Posterior vena cava (tissue), 2 donors: ENCODE measurements at regions of chr14 and their contacts with region 1.

Region 1: GRCh38 chr14:89110110-89110509 is 285.7 kb downstream of the TTC8 start:
- DNase-seq: no peak

Region 2: DNA sequence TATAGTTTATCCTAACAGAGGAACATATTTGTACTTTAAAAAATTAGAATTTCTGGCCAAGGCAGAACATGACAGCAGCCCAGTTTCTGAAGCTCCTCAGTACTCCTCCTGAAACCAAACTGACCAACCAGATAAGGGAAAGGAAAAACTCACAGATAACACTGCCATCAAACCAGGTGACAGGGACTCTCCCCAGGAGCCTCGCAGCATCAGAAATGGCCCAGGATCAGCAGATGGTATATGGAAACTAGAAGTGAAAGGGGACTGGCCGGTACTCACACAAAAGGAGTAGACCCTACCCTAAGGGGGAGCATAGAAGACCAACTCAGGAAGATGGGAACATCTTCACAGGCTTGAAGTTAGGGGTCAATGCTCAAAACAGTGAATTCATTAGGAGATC is 1139.1 kb before region 1 on chr14:
- intact Hi-C with region 1: no loop called
- DNase-seq: no peak

Region 3: DNA sequence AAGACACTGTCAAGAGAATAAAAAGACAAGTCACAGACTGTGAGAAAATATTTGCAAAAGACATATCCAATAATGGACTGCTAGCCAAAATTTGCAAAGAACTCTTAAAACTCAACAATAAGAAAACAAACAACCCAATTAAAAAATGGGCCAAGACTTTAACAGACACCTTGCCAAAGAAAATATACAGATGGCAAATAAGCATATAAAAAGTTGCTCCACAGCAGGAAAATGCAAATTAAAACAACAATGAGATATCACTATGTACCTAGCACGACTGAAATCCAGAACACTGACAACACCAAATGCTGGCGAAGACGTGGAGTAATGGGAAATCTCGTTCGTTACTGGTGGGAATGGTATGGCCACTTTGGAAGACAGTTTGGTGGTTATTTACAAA is 56.8 kb before region 1 on chr14:
- intact Hi-C with region 1: loop called in 1 of 2 experiments (anchors 2 kb)
- DNase-seq: no peak